OCI-LY7 (cell line): ENCODE measurements at regions of chr17 and their contacts with region 1.

Region 1: DNA sequence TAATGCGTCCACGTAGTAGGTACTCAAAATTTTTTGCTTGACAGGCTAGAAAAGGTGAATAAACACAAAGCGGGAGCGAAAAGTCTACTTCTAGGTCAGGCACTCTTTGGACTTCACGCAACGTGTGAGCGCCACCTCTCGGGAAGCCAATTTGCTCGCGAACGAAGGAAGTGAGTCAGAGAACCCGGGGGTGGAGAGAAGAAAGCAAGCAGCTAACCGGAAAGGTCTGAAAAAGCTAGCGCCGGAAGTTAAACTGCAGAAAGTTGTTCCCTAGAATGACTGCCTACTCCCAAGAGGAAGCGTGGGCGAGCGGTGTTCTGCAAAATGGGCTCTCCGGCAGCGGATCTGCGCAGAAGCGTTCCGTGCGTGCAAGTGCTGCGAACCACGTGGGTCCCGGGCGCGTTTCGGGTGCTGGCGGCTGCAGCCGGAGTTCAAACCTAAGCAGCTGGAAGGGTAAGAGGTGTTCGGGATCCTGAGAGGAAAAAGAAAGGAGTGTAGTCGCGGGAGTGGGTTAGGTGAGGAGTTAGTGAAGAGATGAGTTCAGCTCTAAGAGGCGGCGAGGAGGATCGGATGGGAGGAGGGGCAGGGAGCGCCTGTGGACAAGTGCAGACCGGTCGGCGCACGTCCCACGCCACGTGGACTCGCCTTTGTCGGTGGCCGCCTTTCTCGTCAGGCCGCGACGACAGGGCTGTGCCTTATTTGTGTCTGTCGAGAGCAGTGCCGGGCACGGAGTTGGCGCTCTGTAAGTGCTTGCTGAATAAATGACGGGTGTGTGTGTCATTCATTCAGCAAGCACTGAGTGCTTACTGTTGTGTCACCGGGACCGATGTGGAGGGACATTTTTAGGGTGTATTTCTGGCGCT is at the start of gene NME1:
- DNase-seq: peak; percentile 99
- H3K4me3 ChIP-seq: peak within 1 kb of the TSS; percentile 91
- H3K27ac ChIP-seq: peak within 1 kb of the TSS; percentile 70
- H3K4me1 ChIP-seq: peaks cover 21% of the 10 kb centered on the region
- CTCF ChIP-seq: peak; percentile 97
- total RNA-seq, gene NME1: 158 and 209 TPM in 2 replicates

Region 2: DNA sequence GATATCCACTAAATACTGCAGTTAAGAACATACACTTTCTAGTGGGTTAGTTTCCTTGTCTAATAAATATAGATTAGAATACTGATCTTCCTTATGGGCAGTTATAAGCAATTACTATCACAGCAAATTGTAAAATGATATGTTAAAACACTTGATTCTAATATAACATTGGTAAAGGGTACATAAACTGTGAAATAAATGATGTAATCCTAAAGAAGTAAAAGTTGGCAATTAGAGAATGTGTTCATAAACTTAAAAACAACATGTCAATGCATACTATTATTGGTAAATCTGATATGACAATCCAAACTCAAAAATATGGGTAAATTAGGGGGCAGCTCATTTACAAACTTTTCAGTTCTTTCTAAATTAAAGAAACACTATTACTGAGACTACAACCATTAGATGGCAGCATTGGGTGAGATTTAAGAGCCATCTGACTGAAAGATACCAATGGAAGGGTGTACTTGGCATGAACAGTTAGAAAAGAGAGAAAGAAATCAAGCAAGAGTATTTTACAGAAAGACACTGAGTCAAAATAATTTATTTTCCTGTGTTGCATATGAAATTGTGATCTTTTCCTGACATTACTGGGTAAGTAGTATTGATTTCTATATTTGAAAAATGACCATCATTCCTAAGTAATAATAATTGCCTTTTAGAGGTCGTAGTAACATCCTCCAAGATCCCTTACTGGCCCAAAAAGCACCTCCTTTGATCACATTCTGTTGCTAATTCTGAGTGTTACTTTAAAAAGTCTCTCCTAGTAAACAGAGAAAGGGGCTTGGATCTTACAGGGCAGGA is 152.4 kb before region 1 on chr17:
- CTCF ChIA-PET with region 1: interaction called, 3 read pairs
- POLR2A ChIA-PET with region 1: no interaction called
- intact Hi-C with region 1: loop called (anchors 1 kb)
- DNase-seq: peak; percentile 80
- H3K4me3 ChIP-seq: no peak overlapping the region
- H3K27ac ChIP-seq: no peak overlapping the region
- H3K4me1 ChIP-seq: no peaks in the 10 kb centered on the region
- CTCF ChIP-seq: peak; percentile 91

Region 3: GRCh38 chr17:51103451-51103850 is 50.0 kb before region 1 on chr17:
- CTCF ChIA-PET with region 1: no interaction called
- POLR2A ChIA-PET with region 1: no interaction called
- intact Hi-C with region 1: no loop called
- DNase-seq: no peak
- H3K4me3 ChIP-seq: no peak overlapping the region
- H3K27ac ChIP-seq: no peak overlapping the region
- H3K4me1 ChIP-seq: peaks cover 2% of the 10 kb centered on the region
- CTCF ChIP-seq: no peak

Region 4: GRCh38 chr17:51120739-51121617 is 32.5 kb before region 1 on chr17 and contains the start of gene SPAG9:
- CTCF ChIA-PET with region 1: no interaction called
- POLR2A ChIA-PET with region 1: interaction called, 10 read pairs
- intact Hi-C with region 1: loop called (anchors 1 kb)
- DNase-seq: peak; percentile 95
- H3K4me3 ChIP-seq: peak within 1 kb of the TSS; percentile 100
- H3K27ac ChIP-seq: peak within 1 kb of the TSS; percentile 87
- H3K4me1 ChIP-seq: peaks cover 38% of the 10 kb centered on the region
- CTCF ChIP-seq: no peak
- total RNA-seq, gene SPAG9: 61.1 and 78.9 TPM in 2 replicates

Region 5: GRCh38 chr17:51132964-51133319 is 20.5 kb before region 1 on chr17:
- CTCF ChIA-PET with region 1: no interaction called
- POLR2A ChIA-PET with region 1: no interaction called
- intact Hi-C with region 1: no loop called
- DNase-seq: no peak
- H3K4me3 ChIP-seq: no peak overlapping the region
- H3K27ac ChIP-seq: no peak overlapping the region
- H3K4me1 ChIP-seq: peaks cover 3% of the 10 kb centered on the region
- CTCF ChIP-seq: no peak

Region 6: GRCh38 chr17:51166197-51166986 is 13.0 kb after region 1 on chr17 and contains the start of gene NME2:
- CTCF ChIA-PET with region 1: no interaction called
- POLR2A ChIA-PET with region 1: interaction called, 13 read pairs
- intact Hi-C with region 1: no loop called
- DNase-seq: peak; percentile 86
- H3K4me3 ChIP-seq: peak within 1 kb of the TSS; percentile 83
- H3K27ac ChIP-seq: peak within 1 kb of the TSS; percentile 71
- H3K4me1 ChIP-seq: peaks cover 22% of the 10 kb centered on the region
- CTCF ChIP-seq: no peak
- total RNA-seq, gene NME2: 369 and 397 TPM in 2 replicates